ENCODE measurements at regions of chr1 and their contacts with region 1.

Region 1: DNA sequence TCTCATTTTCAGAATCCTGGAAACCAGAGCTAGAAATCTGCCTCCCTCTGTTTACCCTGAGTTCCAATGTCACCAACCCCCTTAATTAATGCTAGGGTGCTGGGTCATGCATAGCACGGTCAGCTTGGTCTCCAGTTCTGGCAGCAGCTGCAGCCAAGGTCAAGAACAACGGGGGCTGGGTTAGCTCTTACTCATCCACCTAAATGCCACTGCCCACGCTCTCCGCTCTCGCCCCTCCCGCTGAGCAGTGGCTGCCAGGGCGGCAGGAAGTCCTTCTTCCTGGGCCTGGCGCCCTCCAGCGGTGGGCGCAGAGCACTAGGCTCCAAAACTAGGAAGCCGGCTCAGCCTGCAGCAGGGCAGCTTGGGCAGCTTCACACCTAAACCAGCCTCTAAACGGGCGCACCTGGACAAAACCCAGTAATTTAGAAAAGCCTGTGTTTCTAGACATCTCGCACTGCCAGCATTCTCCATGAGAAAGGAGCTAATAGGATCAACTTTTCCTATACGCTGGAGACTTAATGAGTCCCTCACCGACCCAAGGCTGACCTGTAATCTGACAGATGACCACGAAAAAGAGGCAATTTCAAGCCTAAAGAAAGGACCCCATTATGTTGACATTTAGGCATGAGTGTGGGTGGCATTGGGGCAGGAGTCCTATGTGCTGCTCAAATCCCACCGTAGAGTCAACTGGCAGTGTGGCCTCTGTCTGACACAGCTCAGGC is 78.3 kb upstream of the LRRN2 start:
- DNase-seq: peak; percentile 94
- H3K4me3 Mint-ChIP-seq: no peak overlapping the region
- H3K27ac Mint-ChIP-seq: no peak overlapping the region
- H3K4me1 Mint-ChIP-seq: peaks cover 11% of the 10 kb centered on the region
- H3K27me3 Mint-ChIP-seq: peaks cover 57% of the 10 kb centered on the region
- CTCF ChIP-seq: peak; percentile 98

Region 2: DNA sequence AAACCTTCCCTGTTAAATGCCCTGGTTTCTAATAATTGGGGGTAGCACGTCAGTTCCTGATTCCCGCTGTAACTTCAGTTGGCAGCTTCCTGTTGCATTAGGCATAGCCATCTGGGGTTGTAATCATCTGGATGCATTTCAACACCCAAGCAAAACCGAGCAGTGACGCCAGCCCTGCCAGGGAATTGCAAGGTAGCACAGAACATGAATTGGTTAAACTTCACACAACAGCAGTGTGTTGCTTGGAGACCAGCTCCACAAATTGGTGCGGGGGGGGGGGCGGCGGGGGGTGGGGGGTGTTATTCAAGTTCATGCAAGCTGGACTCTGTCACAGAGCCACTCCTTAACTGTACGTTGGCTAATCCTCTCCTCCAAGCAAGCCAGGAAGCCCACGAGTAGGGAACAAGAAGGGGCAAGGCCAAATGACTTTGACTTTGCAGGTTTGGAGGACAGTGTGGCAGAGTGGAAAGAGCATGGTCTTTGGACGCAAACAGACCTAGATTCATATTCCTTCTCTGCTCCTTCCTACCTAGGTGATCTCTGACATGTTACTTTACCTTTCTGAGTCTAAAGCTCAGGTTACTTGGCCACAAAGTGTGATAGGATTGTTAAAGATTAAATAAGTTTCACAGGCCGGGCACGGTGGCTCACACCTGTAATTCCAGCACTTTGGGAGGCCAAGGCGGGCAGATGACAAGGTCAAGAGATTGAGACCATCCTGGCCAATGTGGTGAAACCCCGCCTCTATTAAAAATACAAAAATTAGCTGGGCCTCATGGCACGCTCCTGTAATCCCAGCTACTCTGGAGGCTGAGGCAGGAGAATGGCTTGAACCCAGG is 994.1 kb before region 1 on chr1:
- CTCF ChIA-PET with region 1: no interaction called
- POLR2A ChIA-PET with region 1: no interaction called
- intact Hi-C with region 1: no loop called
- DNase-seq: peak; percentile 99
- H3K4me3 Mint-ChIP-seq: peak overlapping the region; percentile 63
- H3K27ac Mint-ChIP-seq: peak overlapping the region; percentile 88
- H3K4me1 Mint-ChIP-seq: peaks cover 32% of the 10 kb centered on the region
- H3K27me3 Mint-ChIP-seq: no peaks in the 10 kb centered on the region
- CTCF ChIP-seq: no peak

Region 3: GRCh38 chr1:204673909-204674649 is 89.8 kb before region 1 on chr1:
- CTCF ChIA-PET with region 1: no interaction called
- POLR2A ChIA-PET with region 1: no interaction called
- intact Hi-C with region 1: no loop called
- DNase-seq: no peak
- H3K4me3 Mint-ChIP-seq: no peak overlapping the region
- H3K27ac Mint-ChIP-seq: no peak overlapping the region
- H3K4me1 Mint-ChIP-seq: no peaks in the 10 kb centered on the region
- H3K27me3 Mint-ChIP-seq: peaks cover 35% of the 10 kb centered on the region
- CTCF ChIP-seq: no peak

Region 4: GRCh38 chr1:204751894-204752687 is 11.8 kb before region 1 on chr1:
- CTCF ChIA-PET with region 1: interaction called, 104 read pairs
- POLR2A ChIA-PET with region 1: interaction called, 7 read pairs
- intact Hi-C with region 1: no loop called
- DNase-seq: peak; percentile 83
- H3K4me3 Mint-ChIP-seq: no peak overlapping the region
- H3K27ac Mint-ChIP-seq: no peak overlapping the region
- H3K4me1 Mint-ChIP-seq: no peaks in the 10 kb centered on the region
- H3K27me3 Mint-ChIP-seq: peaks cover 41% of the 10 kb centered on the region
- CTCF ChIP-seq: peak; percentile 44

Region 5: DNA sequence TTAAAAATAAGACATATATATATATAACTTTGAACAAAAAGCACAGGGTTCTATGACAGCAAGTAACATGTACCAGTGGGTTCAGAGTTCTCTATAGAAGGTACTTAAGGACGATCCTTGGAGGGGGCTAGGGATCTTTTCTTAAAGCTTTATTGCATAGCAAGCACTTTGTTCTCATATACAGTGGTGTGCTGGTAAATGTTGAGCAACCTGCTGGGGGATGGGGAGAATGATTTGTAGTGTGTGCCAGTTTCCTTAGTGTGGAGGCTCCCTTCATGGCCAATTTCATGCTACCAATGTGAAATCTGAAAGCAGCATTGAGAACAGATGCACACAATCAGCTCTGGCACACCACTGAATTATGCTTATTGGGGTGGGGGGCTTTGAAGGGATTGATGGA is 37.3 kb after region 1 on chr1:
- CTCF ChIA-PET with region 1: interaction called, 55 read pairs
- POLR2A ChIA-PET with region 1: interaction called, 3 read pairs
- intact Hi-C with region 1: loop called (anchors 2 kb)
- DNase-seq: no peak
- H3K4me3 Mint-ChIP-seq: no peak overlapping the region
- H3K27ac Mint-ChIP-seq: no peak overlapping the region
- H3K4me1 Mint-ChIP-seq: no peaks in the 10 kb centered on the region
- H3K27me3 Mint-ChIP-seq: peaks cover 44% of the 10 kb centered on the region
- CTCF ChIP-seq: no peak

Measured in MCF 10A (cell line).